ENCODE measurements at regions of chr12 and their contacts with region 1.

Region 1: DNA sequence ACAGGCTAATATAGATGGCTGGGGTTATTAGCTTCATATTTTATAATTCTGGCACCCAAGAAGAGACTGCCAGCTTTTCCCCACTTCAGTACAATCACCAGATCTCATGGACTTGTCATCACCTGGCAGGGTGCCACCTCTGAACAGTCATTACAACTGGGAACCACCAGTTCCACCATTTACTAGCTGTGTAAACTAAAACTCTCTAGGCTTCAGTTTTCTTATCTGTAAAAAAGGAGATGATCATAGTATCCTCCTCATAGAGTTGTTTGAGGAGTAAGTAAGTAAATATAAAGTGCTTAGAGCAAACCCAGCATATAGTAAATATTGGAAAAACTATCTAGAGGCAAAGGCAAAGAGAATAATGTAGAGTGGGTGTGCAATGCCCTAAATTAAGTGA is 19.3 kb downstream of the CPNE8 start:
- DNase-seq: peak; percentile 55
- ATAC-seq: no peak
- H3K4me3 Mint-ChIP-seq: no peak overlapping the region
- H3K27ac Mint-ChIP-seq: no peak overlapping the region
- H3K4me1 Mint-ChIP-seq: peaks cover 3% of the 10 kb centered on the region
- H3K27me3 Mint-ChIP-seq: no peaks in the 10 kb centered on the region

Region 2: GRCh38 chr12:38823739-38824138 is 62.3 kb before region 1 on chr12:
- CTCF ChIA-PET with region 1: no interaction called
- POLR2A ChIA-PET with region 1: no interaction called
- intact Hi-C with region 1: no loop called
- DNase-seq: no peak
- ATAC-seq: no peak
- H3K4me3 Mint-ChIP-seq: no peak overlapping the region
- H3K27ac Mint-ChIP-seq: no peak overlapping the region
- H3K4me1 Mint-ChIP-seq: no peaks in the 10 kb centered on the region
- H3K27me3 Mint-ChIP-seq: no peaks in the 10 kb centered on the region

Region 3: GRCh38 chr12:38921025-38921677 is 35.1 kb after region 1 on chr12:
- CTCF ChIA-PET with region 1: no interaction called
- POLR2A ChIA-PET with region 1: no interaction called
- intact Hi-C with region 1: loop called in 1 of 2 experiments (anchors 5 kb)
- DNase-seq: peak; percentile 61
- ATAC-seq: peak; percentile 51
- H3K4me3 Mint-ChIP-seq: no peak overlapping the region
- H3K27ac Mint-ChIP-seq: no peak overlapping the region
- H3K4me1 Mint-ChIP-seq: no peaks in the 10 kb centered on the region
- H3K27me3 Mint-ChIP-seq: peaks cover 6% of the 10 kb centered on the region